Activated T-helper 2 cell treated with anti-CD3 and anti-CD28 coated beads, Interferon-gamma antibody, Interleukin-2, Interleukin-4, amounts not matched to agents 10 μg/mL and 5 μg/mL and 100 μg/mL, durations not matched to agents 14 hours and 24 hours and 36 hours (primary cell): ENCODE measurements at regions of chr19 and their contacts with region 1.

Region 1: DNA sequence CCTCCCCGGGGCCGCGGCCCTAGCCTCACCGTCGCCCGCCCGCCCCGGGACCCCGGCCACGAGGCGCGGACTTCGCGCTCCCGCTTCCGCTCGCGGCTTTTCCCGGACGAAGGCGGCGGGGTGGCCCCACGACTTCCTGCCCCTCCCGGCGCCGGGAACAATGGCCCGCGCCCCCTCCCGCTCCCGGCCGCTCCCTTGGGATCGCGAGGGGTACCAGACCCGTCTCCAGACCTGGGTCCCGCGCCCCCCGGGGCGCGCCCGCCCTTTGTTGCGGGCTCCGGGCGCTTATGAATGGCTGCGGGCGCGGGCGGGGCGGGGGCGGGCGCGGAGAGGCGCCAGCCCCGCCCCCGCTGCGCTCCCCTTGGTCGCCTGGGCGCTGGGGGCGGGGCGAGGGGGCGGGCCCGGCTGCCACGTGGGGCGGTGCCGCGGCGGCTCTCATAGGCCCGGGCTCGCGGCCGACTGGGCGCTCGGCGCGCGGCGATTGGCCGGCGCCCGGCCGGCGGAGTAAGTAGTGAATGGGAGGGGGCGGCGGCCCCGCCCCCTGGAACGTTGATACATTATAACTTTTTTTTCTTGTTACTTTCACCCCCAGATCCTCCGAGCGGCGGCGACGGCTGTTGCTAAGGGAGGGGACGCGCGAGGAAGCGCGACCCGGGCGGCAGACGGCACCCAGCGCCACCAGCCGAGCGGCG is 1.1 kb downstream of the MIDN start:
- DNase-seq: peak; percentile 93
- H3K4me3 Mint-ChIP-seq: peak overlapping the region; percentile 78
- H3K27ac Mint-ChIP-seq: peak overlapping the region; percentile 46
- H3K4me1 Mint-ChIP-seq: peaks cover 9% of the 10 kb centered on the region
- H3K27me3 Mint-ChIP-seq: no peaks in the 10 kb centered on the region

Region 2: DNA sequence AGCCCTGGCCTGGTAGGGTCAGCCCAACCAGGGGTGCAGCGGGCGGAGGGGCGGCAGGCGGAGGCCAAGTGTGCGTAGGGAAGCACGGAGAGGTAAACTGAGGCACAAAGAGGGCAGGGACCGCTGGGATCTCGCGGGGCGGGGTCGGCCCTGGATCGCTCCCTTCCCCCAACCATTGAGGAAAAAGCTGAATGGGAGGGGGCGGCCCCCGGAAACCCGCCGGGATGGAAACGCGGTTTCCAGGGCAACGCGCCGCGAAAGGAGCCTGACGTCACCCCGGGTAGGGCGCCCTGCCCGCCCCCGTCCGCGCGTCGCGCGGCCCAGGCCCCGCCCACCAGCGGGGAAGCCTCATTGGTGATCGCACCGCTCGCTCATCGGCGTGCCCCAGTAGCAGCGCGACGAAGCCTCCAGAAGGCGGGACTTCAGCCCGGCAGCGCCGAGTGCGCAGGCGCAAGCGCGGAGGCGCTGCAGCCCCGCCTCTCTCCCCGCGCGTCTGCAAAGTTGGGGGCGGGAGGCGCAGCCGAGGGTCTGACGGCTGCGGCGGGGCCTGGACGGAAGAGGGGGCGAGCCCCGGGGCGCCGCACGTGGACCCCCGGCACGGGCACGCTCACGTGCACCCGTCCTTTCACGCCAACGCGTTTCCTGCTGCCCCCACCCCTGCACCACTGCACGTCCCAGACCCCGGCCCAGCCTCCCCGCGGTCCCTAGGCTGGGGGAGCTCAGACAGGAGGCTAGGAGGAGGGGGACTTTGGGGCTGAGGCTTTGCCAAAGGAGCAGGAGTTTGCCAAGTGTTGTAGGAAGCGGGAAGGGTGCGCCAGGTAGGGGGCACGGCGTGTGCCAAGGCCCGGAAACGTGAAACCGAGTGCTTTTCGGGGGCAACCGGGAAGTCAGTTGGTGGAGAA is 11.4 kb after region 1 on chr19:
- intact Hi-C with region 1: loop called (anchors 1 kb)
- DNase-seq: peak; percentile 97
- H3K4me3 Mint-ChIP-seq: peak overlapping the region; percentile 88
- H3K27ac Mint-ChIP-seq: peak overlapping the region; percentile 90
- H3K4me1 Mint-ChIP-seq: peaks cover 43% of the 10 kb centered on the region
- H3K27me3 Mint-ChIP-seq: no peaks in the 10 kb centered on the region

Region 3: GRCh38 chr19:1269065-1269477 is 19.6 kb after region 1 on chr19 and contains the start of gene CIRBP:
- intact Hi-C with region 1: loop called (anchors 1 kb)
- DNase-seq: peak; percentile 99
- H3K4me3 Mint-ChIP-seq: peak within 1 kb of the TSS; percentile 93
- H3K27ac Mint-ChIP-seq: peak within 1 kb of the TSS; percentile 91
- H3K4me1 Mint-ChIP-seq: peaks cover 47% of the 10 kb centered on the region
- H3K27me3 Mint-ChIP-seq: no peaks in the 10 kb centered on the region
- total RNA-seq, gene CIRBP: 214 and 226 TPM in 2 replicates

Region 4: GRCh38 chr19:1315470-1316231 is 66.2 kb after region 1 on chr19:
- intact Hi-C with region 1: no loop called
- DNase-seq: no peak
- H3K4me3 Mint-ChIP-seq: no peak overlapping the region
- H3K27ac Mint-ChIP-seq: no peak overlapping the region
- H3K4me1 Mint-ChIP-seq: no peaks in the 10 kb centered on the region
- H3K27me3 Mint-ChIP-seq: peaks cover 14% of the 10 kb centered on the region